Activated T-helper 2 cell treated with anti-CD3 and anti-CD28 coated beads, Interferon-gamma antibody, Interleukin-2, Interleukin-4, amounts not matched to agents 10 μg/mL and 5 μg/mL and 100 μg/mL, durations not matched to agents 14 hours and 24 hours and 36 hours (primary cell): ENCODE measurements at regions of chr1 and their contacts with region 1.

Region 1: DNA sequence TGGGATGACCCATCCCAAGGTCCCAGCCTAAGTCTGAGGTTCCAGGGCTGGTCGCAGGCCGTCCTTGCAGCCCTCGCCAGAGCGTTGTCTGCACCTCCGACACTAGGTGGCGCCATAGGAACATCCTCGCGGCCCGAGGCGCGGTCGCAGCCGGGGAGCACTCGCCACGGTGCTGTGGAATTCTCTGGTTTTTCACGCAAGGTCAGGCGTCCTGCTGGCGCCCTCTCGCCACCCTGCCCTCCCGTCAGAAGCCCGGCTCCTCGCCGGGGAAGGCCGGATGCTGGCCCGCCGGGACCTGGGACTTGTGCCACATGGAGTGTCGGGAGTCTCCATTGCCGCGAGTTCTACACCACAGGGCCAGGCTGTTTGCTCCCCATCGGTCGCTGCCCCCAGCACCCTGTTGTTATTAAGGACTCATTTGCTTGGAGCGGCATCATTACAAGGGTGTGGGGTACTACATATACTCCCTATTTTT is 196.8 kb upstream of the LMO4 start:
- DNase-seq: peak; percentile 55
- H3K4me3 Mint-ChIP-seq: peak overlapping the region; percentile 71
- H3K27ac Mint-ChIP-seq: no peak overlapping the region
- H3K4me1 Mint-ChIP-seq: peaks cover 3% of the 10 kb centered on the region
- H3K27me3 Mint-ChIP-seq: peaks cover 32% of the 10 kb centered on the region

Region 2: GRCh38 chr1:87279966-87280535 is 148.2 kb after region 1 on chr1:
- intact Hi-C with region 1: loop called (anchors 5 kb)
- DNase-seq: no peak
- H3K4me3 Mint-ChIP-seq: no peak overlapping the region
- H3K27ac Mint-ChIP-seq: no peak overlapping the region
- H3K4me1 Mint-ChIP-seq: peaks cover 2% of the 10 kb centered on the region
- H3K27me3 Mint-ChIP-seq: peaks cover 7% of the 10 kb centered on the region

Region 3: DNA sequence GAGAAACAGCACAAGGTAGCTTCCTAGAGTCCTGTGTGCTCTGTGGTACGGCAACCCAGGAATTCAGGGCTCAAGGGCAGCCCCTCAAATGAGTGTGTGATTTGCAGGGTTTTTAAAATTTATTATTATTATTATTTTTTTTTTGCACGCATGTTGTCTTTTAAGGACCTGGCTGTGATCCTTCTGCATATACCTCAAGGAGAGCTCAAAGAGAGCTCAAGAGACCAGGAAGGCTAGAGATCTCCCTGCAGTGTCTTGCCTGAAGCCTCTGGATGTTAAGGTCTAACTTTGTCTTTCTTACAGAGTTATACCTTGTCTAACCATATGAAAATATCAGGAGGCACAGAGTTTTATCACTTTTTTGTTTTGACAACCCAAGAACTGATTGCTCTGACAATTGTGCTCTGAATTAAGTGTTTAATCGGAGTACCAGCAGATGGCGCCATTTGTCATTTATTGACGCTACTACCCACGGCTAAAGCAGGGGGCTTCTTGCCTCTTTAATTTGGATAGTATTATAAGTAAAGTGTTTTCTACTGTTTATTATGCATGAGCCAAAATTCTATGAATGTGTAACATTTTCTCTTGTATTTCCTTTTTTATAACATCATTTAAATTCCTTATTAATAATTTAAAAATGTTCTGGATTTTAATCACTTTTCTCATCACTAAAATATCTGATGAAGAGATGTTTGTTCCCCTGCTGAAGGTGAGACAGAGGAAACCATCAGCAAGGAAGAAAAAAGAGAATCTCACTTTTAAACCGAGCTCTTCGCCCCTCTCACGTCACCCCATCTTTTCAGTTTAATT is 161.0 kb after region 1 on chr1:
- intact Hi-C with region 1: loop called (anchors 5 kb)
- DNase-seq: peak; percentile 15
- H3K4me3 Mint-ChIP-seq: no peak overlapping the region
- H3K27ac Mint-ChIP-seq: no peak overlapping the region
- H3K4me1 Mint-ChIP-seq: no peaks in the 10 kb centered on the region
- H3K27me3 Mint-ChIP-seq: no peaks in the 10 kb centered on the region

Region 4: GRCh38 chr1:87953732-87954344 is 822.0 kb after region 1 on chr1:
- intact Hi-C with region 1: loop called (anchors 5 kb)
- DNase-seq: peak; percentile 22
- H3K4me3 Mint-ChIP-seq: no peak overlapping the region
- H3K27ac Mint-ChIP-seq: no peak overlapping the region
- H3K4me1 Mint-ChIP-seq: no peaks in the 10 kb centered on the region
- H3K27me3 Mint-ChIP-seq: peaks cover 5% of the 10 kb centered on the region